ENCODE measurements at regions of chr7 and their contacts with region 1.

Region 1: GRCh38 chr7:106285051-106285854 is 470 bp upstream of the NAMPT start:
- DNase-seq: peak; percentile 97
- ATAC-seq: peak; percentile 77
- H3K4me3 ChIP-seq: peak overlapping the region; percentile 99
- H3K27ac ChIP-seq: peak overlapping the region; percentile 100
- H3K4me1 ChIP-seq: peaks cover 3% of the 10 kb centered on the region
- H3K27me3 ChIP-seq: no peaks in the 10 kb centered on the region
- CTCF ChIP-seq: no peak
- EP300 ChIP-seq: peak; percentile 42 to 52; a peak in 2 of 4 replicates
- POLR2A ChIP-seq: peak; percentile 78
- RAD21 ChIP-seq: no peak

Region 2: GRCh38 chr7:106112117-106112971 is 172.9 kb before region 1 on chr7 and contains the start of gene SYPL1:
- CTCF ChIA-PET with region 1: interaction called, 4 read pairs
- POLR2A ChIA-PET with region 1: interaction called, 7 read pairs
- RAD21 ChIA-PET with region 1: interaction called, 11 read pairs
- SMC1A ChIA-PET with region 1: no interaction called
- in situ Hi-C with region 1: no loop called
- intact Hi-C with region 1: no loop called
- DNase-seq: peak; percentile 66
- ATAC-seq: peak; percentile 88
- H3K4me3 ChIP-seq: peak within 1 kb of the TSS; percentile 83
- H3K27ac ChIP-seq: peak within 1 kb of the TSS; percentile 94
- H3K4me1 ChIP-seq: peaks cover 19% of the 10 kb centered on the region
- H3K27me3 ChIP-seq: no peaks in the 10 kb centered on the region
- CTCF ChIP-seq: peak in 2 of 3 experiments; percentile 5 to 7; a peak in 1 of 6 replicates
- EP300 ChIP-seq: 0 out of 4 replicates have a peak, but pooled peaks of 1 of the 2 experiments have one; percentile 29
- POLR2A ChIP-seq: peak; percentile 91
- RAD21 ChIP-seq: no peak
- polyA plus RNA-seq, gene SYPL1: 109 to 177 TPM

Region 3: GRCh38 chr7:106273009-106273668 is 12.1 kb before region 1 on chr7:
- CTCF ChIA-PET with region 1: interaction called, 16 read pairs
- POLR2A ChIA-PET with region 1: interaction called, 31 read pairs
- RAD21 ChIA-PET with region 1: interaction called, 18 read pairs
- SMC1A ChIA-PET with region 1: interaction called, 52 read pairs
- in situ Hi-C with region 1: no loop called
- intact Hi-C with region 1: no loop called
- DNase-seq: peak; percentile 50
- ATAC-seq: peak; percentile 74
- H3K4me3 ChIP-seq: peak overlapping the region; percentile 28; the same call in 1 of the 2 replicates
- H3K27ac ChIP-seq: no peak overlapping the region
- H3K4me1 ChIP-seq: peaks cover 13% of the 10 kb centered on the region; the same call in 1 of the 2 replicates
- H3K27me3 ChIP-seq: no peaks in the 10 kb centered on the region
- CTCF ChIP-seq: no peak
- EP300 ChIP-seq: peak; percentile 38 to 45; a peak in 2 of 4 replicates
- POLR2A ChIP-seq: no peak
- RAD21 ChIP-seq: no peak

Region 4: GRCh38 chr7:106358103-106358663 is 72.9 kb after region 1 on chr7:
- CTCF ChIA-PET with region 1: interaction called, 3 read pairs
- POLR2A ChIA-PET with region 1: interaction called, 11 read pairs
- RAD21 ChIA-PET with region 1: interaction called, 12 read pairs
- SMC1A ChIA-PET with region 1: interaction called, 23 read pairs
- in situ Hi-C with region 1: no loop called
- intact Hi-C with region 1: no loop called
- DNase-seq: no peak
- ATAC-seq: peak; percentile 95
- H3K4me3 ChIP-seq: no peak overlapping the region
- H3K27ac ChIP-seq: peak overlapping the region; percentile 31; the same call in 1 of the 2 replicates
- H3K4me1 ChIP-seq: no peaks in the 10 kb centered on the region; the same call in 1 of the 2 replicates
- H3K27me3 ChIP-seq: no peaks in the 10 kb centered on the region
- CTCF ChIP-seq: no peak
- EP300 ChIP-seq: peak in 1 of 2 experiments; percentile 67; a peak in 1 of 4 replicates
- POLR2A ChIP-seq: no peak
- RAD21 ChIP-seq: no peak

Region 5: DNA sequence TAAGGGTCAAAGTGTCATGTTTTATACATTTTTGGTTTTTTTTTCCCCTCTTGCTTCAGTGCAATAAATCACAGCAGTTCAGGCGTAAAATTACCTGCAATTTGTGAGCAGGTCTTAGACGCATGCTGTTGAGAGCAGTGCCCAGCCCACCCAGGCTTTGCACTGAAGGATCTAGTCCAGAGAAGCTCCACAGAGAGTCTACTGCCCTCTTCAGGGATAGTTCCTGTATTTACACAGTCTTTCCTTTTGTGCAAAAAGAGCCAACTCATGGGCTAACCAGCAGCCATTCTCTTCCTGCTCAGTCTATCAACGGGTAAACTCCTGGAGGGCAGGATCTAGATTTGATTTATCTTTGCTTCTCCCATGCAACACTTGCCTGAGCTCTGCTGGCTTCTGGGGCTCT is 81.8 kb after region 1 on chr7:
- CTCF ChIA-PET with region 1: interaction called, 11 read pairs
- POLR2A ChIA-PET with region 1: interaction called, 3 read pairs
- RAD21 ChIA-PET with region 1: interaction called, 5 read pairs
- SMC1A ChIA-PET with region 1: interaction called, 16 read pairs
- in situ Hi-C with region 1: no loop called
- intact Hi-C with region 1: no loop called
- DNase-seq: no peak
- ATAC-seq: peak; percentile 80
- H3K4me3 ChIP-seq: no peak overlapping the region
- H3K27ac ChIP-seq: no peak overlapping the region
- H3K4me1 ChIP-seq: no peaks in the 10 kb centered on the region
- H3K27me3 ChIP-seq: no peaks in the 10 kb centered on the region
- CTCF ChIP-seq: peak; percentile 35 to 48 (median 41); a peak in 5 of 6 replicates
- EP300 ChIP-seq: no peak
- POLR2A ChIP-seq: no peak
- RAD21 ChIP-seq: peak; percentile 75

Region 6: GRCh38 chr7:106377847-106378361 is 92.7 kb after region 1 on chr7:
- CTCF ChIA-PET with region 1: no interaction called
- POLR2A ChIA-PET with region 1: no interaction called
- RAD21 ChIA-PET with region 1: no interaction called
- SMC1A ChIA-PET with region 1: no interaction called
- in situ Hi-C with region 1: no loop called
- intact Hi-C with region 1: no loop called
- DNase-seq: no peak
- ATAC-seq: peak; percentile 63
- H3K4me3 ChIP-seq: no peak overlapping the region
- H3K27ac ChIP-seq: no peak overlapping the region
- H3K4me1 ChIP-seq: no peaks in the 10 kb centered on the region
- H3K27me3 ChIP-seq: no peaks in the 10 kb centered on the region
- CTCF ChIP-seq: no peak
- EP300 ChIP-seq: no peak
- POLR2A ChIP-seq: no peak
- RAD21 ChIP-seq: no peak

Region 7: DNA sequence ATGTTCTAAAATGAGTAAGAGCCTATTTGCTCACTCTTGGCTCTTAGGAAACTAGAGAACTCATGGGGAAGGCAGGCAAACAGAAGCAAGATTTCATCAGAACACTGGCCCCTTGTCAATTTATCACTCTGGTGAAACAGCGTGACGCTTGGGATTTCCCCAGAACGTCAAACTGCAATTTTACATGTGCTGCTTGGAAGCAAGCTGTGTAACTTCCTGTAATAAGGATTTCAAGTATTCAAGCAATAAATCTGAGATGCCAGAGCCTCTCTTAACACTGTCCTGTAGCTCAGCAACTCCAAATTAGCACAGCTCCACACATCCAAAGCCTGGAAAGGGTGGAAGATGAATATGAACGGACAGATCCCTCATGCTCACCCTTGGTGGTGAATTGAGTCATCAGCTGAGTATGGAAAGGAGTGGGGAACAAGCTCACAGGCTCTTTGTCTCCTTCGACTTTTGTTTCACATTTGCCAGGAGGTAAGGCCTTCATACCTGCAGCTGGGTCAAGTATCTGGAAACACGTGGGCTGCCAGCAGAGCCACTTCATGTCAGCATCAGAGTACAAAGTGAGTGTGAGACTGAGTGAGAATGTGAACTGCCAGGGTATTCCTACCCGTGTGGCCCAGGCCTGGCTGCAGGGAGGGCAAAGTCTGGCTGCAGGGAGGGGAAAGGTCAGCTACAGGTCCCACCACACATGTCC is 139.9 kb after region 1 on chr7:
- CTCF ChIA-PET with region 1: interaction called, 4 read pairs
- POLR2A ChIA-PET with region 1: interaction called, 12 read pairs
- RAD21 ChIA-PET with region 1: interaction called, 9 read pairs
- SMC1A ChIA-PET with region 1: interaction called, 7 read pairs
- in situ Hi-C with region 1: no loop called
- intact Hi-C with region 1: loop called (anchors 2 kb)
- DNase-seq: peak; percentile 93
- ATAC-seq: peak; percentile 94
- H3K4me3 ChIP-seq: peak overlapping the region; percentile 37; the same call in 1 of the 2 replicates
- H3K27ac ChIP-seq: peak overlapping the region; percentile 81
- H3K4me1 ChIP-seq: peaks cover 23% of the 10 kb centered on the region
- H3K27me3 ChIP-seq: no peaks in the 10 kb centered on the region
- CTCF ChIP-seq: no peak
- EP300 ChIP-seq: peak; percentile 83 to 85
- POLR2A ChIP-seq: no peak
- RAD21 ChIP-seq: no peak

Measured in GM12878 (cell line).